ENCODE measurements at regions of chr20 and their contacts with region 1.

Region 1: DNA sequence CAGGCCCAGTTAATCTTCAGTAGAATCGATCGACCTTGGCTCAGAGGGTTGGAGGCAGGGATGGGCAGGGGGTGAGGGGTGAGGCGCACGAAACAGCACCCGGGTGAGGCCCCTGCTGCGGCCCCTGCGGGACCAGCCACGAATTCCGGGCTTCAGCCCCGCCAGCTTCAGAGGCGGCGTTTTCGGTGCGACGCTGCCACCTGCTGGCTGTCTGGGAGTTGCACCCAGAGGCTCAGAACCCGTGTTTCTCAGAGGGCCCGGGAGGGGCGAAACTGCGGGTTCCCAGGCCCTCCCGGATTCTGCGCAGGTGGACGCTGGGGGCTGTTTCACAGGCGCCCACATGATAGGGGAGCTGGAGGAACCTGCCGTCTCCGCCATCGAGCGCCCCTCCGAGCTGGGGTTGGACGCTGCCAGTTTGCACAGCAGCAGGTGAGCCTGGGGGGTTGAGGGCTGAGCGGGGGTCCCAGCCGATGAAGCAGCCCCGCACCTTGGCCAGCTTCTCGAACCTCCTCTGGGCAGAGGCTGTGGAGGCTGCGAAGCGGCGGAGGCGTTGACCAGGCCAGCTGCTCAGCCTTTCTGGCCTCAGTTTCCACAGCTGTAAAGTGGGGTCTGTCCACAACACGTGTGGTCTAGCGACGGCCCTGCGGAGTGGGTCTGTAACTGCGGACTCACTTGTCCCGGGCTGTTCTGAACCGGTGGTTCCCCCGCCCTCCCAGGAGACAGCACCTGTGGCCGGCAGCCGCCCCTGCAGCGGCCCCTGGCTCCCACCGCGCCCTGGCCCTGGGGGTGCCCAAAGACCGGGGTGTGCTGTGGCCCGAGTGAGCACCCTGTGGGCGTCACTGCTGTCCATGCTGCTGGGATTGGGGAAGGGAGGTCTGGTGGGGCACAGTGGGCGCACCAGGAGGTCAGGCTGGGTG is 2.5 kb upstream of the BHLHE23 start:
- DNase-seq: peak; percentile 67 to 82
- ATAC-seq: peak; percentile 80 to 92 (median 86)
- H3K4me3 ChIP-seq: peak overlapping the region in 2 of 10 donors; percentile 6 to 16
- H3K27ac ChIP-seq: no peak overlapping the region
- H3K4me1 ChIP-seq: peaks cover 6 to 48% (median 23%) of the 10 kb centered on the region in 9 donors
- H3K27me3 ChIP-seq: peaks cover 57 to 100% (median 100%) of the 10 kb centered on the region in 7 donors
- CTCF ChIP-seq: peak; percentile 90 to 97 (median 94)

Region 2: GRCh38 chr20:62675156-62675876 is 334.0 kb before region 1 on chr20:
- intact Hi-C with region 1: loop called in 1 of 10 experiments (anchors 10 kb)
- DNase-seq: no peak
- ATAC-seq: peak in 3 of 8 donors; percentile 18 to 41 (median 24)
- H3K4me3 ChIP-seq: no peak overlapping the region
- H3K27ac ChIP-seq: no peak overlapping the region
- H3K4me1 ChIP-seq: peaks cover 0 to 34% (median 0%) of the 10 kb centered on the region in 9 donors
- H3K27me3 ChIP-seq: peaks cover 0 to 41% (median 8%) of the 10 kb centered on the region in 7 donors
- CTCF ChIP-seq: no peak

Region 3: DNA sequence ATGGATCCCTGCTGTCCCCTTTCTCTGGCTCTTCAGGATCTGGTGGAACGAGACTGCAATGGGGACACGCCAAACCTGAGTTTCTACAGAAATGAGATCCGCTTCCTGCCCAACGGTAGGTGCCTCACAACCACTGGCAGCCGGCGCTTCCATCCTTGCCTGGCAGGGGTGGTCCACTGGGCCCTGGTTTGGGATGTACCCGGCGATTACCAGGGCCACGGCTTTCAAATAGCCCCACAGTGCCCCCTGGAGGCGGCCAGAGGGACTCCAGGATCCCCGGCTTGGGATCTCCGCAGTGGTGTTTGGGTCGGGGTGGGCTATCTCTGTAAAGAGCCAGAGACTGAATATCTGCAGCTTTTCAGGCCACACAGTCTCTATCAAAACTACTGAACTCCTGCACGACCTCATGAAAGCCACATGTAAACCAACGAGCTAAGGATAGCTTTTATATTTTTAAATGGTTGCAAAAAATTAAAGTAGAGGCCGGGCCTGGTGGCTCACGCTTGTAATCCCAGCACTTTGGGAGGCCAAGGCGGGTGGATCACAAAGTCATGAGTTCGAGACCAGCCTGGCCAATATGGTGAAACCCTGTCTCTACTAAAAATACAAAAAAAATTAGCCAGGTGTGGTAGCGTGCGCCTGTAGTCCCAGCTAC is 201.0 kb before region 1 on chr20:
- intact Hi-C with region 1: no loop called
- DNase-seq: peak; percentile 66 to 75
- ATAC-seq: peak in 7 of 8 donors; percentile 36 to 68 (median 48)
- H3K4me3 ChIP-seq: no peak overlapping the region
- H3K27ac ChIP-seq: no peak overlapping the region
- H3K4me1 ChIP-seq: peaks cover 11 to 47% (median 39%) of the 10 kb centered on the region in 9 donors
- H3K27me3 ChIP-seq: no peaks in the 10 kb centered on the region
- CTCF ChIP-seq: peak; percentile 92 to 97 (median 95)

Region 4: GRCh38 chr20:62875419-62876361 is 133.6 kb before region 1 on chr20:
- intact Hi-C with region 1: loop called (anchors 2 to 10 kb)
- DNase-seq: peak; percentile 79 to 80
- ATAC-seq: peak; percentile 77 to 93 (median 85)
- H3K4me3 ChIP-seq: peak overlapping the region in 5 of 10 donors; percentile 8 to 35 (median 21)
- H3K27ac ChIP-seq: peak overlapping the region; percentile 7 to 90 (median 76)
- H3K4me1 ChIP-seq: peaks cover 14 to 33% (median 24%) of the 10 kb centered on the region in 9 donors
- H3K27me3 ChIP-seq: peaks cover 0 to 6% (median 0%) of the 10 kb centered on the region in 7 donors
- CTCF ChIP-seq: peak in 7 of 9 donors; percentile 29 to 62 (median 41)

Region 5: DNA sequence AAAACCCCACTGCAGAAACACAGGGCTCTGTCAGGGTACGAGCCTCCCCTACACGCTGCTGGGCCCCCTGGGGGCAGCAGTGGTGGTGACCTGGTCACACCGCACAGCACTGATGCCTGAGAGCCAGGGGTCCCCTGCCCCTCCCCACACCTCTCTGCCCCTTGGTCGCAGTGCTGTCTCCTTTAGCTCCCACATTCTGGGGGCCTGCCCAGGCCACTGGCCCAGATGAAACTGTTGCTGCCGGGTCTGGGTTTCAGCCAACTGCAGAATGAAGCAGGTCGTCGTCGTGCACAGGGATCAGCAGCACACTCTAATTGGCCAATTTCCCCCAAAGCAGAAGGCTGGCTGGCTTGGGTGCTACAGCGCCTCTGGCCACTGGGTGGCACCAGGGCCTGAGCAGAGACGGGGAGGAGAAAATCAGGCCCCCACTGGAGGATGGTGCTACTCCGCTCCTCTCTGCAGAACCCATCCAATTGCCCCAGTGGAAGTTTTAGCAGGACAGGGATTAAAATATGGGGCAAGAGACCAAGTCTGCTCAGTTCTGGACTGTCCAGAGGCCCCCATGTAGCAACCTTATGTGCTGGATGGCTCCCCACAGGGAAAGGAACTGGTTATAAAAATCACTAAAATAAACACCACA is 109.1 kb before region 1 on chr20:
- intact Hi-C with region 1: loop called (anchors 2 to 10 kb)
- DNase-seq: peak; percentile 66 to 72
- ATAC-seq: peak; percentile 87 to 95 (median 91)
- H3K4me3 ChIP-seq: no peak overlapping the region
- H3K27ac ChIP-seq: no peak overlapping the region
- H3K4me1 ChIP-seq: peaks cover 7 to 36% (median 17%) of the 10 kb centered on the region in 9 donors
- H3K27me3 ChIP-seq: no peaks in the 10 kb centered on the region
- CTCF ChIP-seq: peak; percentile 80 to 93 (median 89)

Region 6: GRCh38 chr20:62953839-62954703 is 55.2 kb before region 1 on chr20:
- intact Hi-C with region 1: loop called in 1 of 10 experiments (anchors 10 kb)
- DNase-seq: peak; percentile 66 to 76
- ATAC-seq: peak; percentile 50 to 88 (median 73)
- H3K4me3 ChIP-seq: peak overlapping the region in 9 of 10 donors; percentile 0 to 53 (median 32)
- H3K27ac ChIP-seq: peak overlapping the region; percentile 22 to 86 (median 76)
- H3K4me1 ChIP-seq: peaks cover 15 to 39% (median 26%) of the 10 kb centered on the region in 9 donors
- H3K27me3 ChIP-seq: no peaks in the 10 kb centered on the region
- CTCF ChIP-seq: no peak

Region 7: GRCh38 chr20:62972270-62973032 is 36.9 kb before region 1 on chr20:
- intact Hi-C with region 1: loop called in 8 of 10 experiments (anchors 1 to 2 kb)
- DNase-seq: peak; percentile 85 to 87
- ATAC-seq: peak; percentile 88 to 96 (median 94)
- H3K4me3 ChIP-seq: peak overlapping the region in 9 of 10 donors; percentile 13 to 45 (median 30)
- H3K27ac ChIP-seq: no peak overlapping the region
- H3K4me1 ChIP-seq: peaks cover 0 to 12% (median 8%) of the 10 kb centered on the region in 9 donors
- H3K27me3 ChIP-seq: peaks cover 14 to 80% (median 65%) of the 10 kb centered on the region in 7 donors
- CTCF ChIP-seq: peak; percentile 79 to 92 (median 85)

Region 8: GRCh38 chr20:63145166-63145565 is 135.9 kb after region 1 on chr20:
- intact Hi-C with region 1: no loop called
- DNase-seq: no peak
- ATAC-seq: no peak
- H3K4me3 ChIP-seq: no peak overlapping the region
- H3K27ac ChIP-seq: no peak overlapping the region
- H3K4me1 ChIP-seq: peaks cover 0 to 4% (median 0%) of the 10 kb centered on the region in 9 donors
- H3K27me3 ChIP-seq: peaks cover 0 to 57% (median 32%) of the 10 kb centered on the region in 7 donors
- CTCF ChIP-seq: no peak

Region 9: DNA sequence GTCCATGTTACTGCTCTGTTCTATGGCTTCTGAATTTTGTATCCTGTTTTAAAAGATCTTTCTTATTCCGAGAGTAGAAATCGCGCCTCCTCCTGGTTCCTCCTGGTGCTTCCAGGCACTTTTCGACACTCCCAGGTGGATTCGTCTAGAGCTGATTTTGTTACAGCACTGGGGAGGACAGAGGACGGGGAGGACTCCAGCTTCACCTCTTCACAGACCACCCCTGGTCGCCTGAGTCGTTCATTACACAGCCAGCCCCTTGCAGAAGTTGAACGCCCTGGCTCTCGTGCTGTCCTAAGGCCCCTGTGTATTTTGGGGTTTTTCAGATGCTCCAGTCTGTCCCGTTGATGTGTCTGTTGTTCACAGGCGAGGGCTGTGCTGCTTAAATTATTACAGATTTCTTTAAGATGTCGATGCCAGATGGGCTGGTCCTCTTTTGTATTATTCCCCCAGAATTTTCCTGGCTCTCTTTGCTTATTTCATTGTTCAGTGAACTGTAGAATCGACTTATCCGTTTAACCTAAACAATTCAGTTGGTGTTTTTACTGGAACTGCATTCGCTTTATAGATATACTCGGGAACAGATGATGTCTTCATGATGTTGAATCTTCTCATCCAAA is 314.2 kb after region 1 on chr20:
- intact Hi-C with region 1: no loop called
- DNase-seq: no peak
- ATAC-seq: no peak
- H3K4me3 ChIP-seq: no peak overlapping the region
- H3K27ac ChIP-seq: no peak overlapping the region
- H3K4me1 ChIP-seq: peaks cover 0 to 10% (median 0%) of the 10 kb centered on the region in 9 donors
- H3K27me3 ChIP-seq: peaks cover 0 to 31% (median 10%) of the 10 kb centered on the region in 7 donors
- CTCF ChIP-seq: no peak

Measured in heart right ventricle (tissue), 16 donors.